Gastrocnemius medialis (tissue), 4 donors: ENCODE measurements at regions of chr2 and their contacts with region 1.

Region 1: GRCh38 chr2:203918839-203919238 is 17.7 kb upstream of the ICOS start:
- DNase-seq: no peak
- ATAC-seq: no peak
- H3K4me3 ChIP-seq: no peak overlapping the region
- H3K27ac ChIP-seq: no peak overlapping the region
- H3K4me1 ChIP-seq: peaks cover 0 to 9% of the 10 kb centered on the region in 2 donors
- H3K27me3 ChIP-seq: no peaks in the 10 kb centered on the region
- CTCF ChIP-seq: no peak
- POLR2A ChIP-seq: no peak

Region 2: GRCh38 chr2:203786549-203787351 is 132.1 kb before region 1 on chr2:
- in situ Hi-C with region 1: no loop called
- intact Hi-C with region 1: no loop called
- DNase-seq: peak; percentile 26 to 49
- ATAC-seq: peak; percentile 64 to 77
- H3K4me3 ChIP-seq: no peak overlapping the region
- H3K27ac ChIP-seq: peak overlapping the region in 3 of 4 donors; percentile 28 to 38 (median 28)
- H3K4me1 ChIP-seq: peaks cover 0 to 29% of the 10 kb centered on the region in 2 donors
- H3K27me3 ChIP-seq: no peaks in the 10 kb centered on the region
- CTCF ChIP-seq: no peak
- POLR2A ChIP-seq: no peak

Region 3: DNA sequence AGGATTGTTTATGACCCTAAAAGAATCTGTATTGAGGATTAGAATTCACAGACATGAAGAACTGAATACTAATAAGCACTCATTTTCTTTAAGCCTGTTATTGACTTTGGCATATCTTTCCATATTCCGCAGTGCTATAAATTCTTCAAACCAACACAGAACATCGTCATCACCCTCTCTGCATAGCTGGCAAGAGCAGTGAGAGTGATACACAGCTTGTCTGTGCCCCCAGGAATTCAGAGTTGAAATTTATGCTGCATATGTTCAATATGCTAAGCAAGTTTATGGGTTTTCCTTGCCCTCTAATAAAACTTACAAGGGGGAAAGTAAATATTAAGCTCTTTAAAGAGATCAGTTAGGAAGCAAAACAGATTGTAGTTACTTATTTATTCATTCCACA is 18.6 kb before region 1 on chr2:
- in situ Hi-C with region 1: no loop called
- intact Hi-C with region 1: loop called (anchors 1 kb)
- DNase-seq: no peak
- ATAC-seq: no peak
- H3K4me3 ChIP-seq: no peak overlapping the region
- H3K27ac ChIP-seq: no peak overlapping the region
- H3K4me1 ChIP-seq: no peaks in the 10 kb centered on the region
- H3K27me3 ChIP-seq: no peaks in the 10 kb centered on the region
- CTCF ChIP-seq: no peak
- POLR2A ChIP-seq: no peak